ENCODE measurements at regions of chr2 and their contacts with region 1.

Region 1: DNA sequence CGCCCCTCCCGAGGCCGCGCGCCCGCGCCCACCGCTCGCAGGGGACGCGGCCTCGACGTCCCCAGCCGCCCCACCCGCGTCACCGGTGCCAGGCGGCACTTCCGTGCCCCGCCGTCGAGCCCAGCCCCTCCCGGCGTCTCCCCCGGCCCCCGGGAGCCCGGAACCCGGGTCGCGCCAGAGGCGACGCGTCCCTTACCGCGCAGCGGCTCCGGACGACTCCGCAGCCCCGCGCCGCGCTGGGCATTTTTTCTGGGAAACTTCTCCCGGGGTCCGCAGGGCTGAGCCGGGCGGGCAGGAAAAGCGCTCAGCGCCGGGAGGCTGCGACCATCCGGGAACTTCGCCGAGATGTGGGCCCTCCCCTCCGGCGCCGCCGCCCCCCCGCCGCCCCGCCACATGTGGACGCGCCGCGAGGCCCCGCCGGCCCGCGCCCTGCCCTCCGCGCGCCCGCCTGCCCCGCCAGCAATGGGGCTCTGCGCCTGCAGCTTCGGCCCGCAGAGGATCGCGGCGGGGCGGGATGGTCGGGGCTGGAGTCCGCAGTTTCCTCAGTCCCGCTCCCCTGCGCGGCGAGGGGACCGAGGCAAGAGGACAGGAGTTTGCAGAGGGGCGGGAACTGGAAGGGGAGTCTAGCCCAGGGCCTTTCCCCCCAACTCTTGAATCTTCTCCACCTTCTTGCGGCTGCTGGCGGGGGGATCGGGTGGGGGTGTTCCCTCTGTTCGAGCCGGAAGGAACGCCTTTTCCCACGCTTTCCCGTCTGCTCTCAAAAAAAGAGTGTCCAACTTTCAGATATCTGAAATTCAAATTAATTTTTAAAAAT is 81.5 kb downstream of the CHRNA1 start:
- DNase-seq: no peak
- ATAC-seq: peak; percentile 83
- H3K4me3 ChIP-seq: peak overlapping the region; percentile 54 to 58
- H3K27ac ChIP-seq: no peak overlapping the region
- H3K4me1 ChIP-seq: peaks cover 6% of the 10 kb centered on the region
- H3K27me3 ChIP-seq: peaks cover 22% of the 10 kb centered on the region
- CTCF ChIP-seq: no peak

Region 2: DNA sequence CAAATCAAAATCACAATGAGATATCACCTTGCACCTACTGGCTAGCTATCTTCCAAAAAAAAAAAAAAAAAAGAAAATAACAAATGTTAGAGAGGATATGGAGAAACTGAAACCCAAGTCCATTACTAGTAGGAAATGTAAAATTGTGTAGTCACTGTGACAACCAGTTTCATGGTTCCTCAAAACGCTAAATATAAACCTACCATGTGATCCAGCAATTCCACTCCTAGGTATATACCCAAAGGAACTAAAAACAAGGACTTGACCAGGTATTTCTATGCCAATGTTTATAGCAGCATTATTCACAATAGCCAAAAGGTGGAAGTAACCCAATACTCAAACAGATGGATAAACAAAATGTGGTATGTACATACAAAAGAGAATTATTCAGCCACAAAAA is 299.0 kb before region 1 on chr2:
- CTCF ChIA-PET with region 1: no interaction called
- POLR2A ChIA-PET with region 1: no interaction called
- in situ Hi-C with region 1: no loop called
- intact Hi-C with region 1: no loop called
- DNase-seq: no peak
- ATAC-seq: no peak
- H3K4me3 ChIP-seq: no peak overlapping the region
- H3K27ac ChIP-seq: no peak overlapping the region
- H3K4me1 ChIP-seq: no peaks in the 10 kb centered on the region
- H3K27me3 ChIP-seq: no peaks in the 10 kb centered on the region
- CTCF ChIP-seq: no peak

Region 3: DNA sequence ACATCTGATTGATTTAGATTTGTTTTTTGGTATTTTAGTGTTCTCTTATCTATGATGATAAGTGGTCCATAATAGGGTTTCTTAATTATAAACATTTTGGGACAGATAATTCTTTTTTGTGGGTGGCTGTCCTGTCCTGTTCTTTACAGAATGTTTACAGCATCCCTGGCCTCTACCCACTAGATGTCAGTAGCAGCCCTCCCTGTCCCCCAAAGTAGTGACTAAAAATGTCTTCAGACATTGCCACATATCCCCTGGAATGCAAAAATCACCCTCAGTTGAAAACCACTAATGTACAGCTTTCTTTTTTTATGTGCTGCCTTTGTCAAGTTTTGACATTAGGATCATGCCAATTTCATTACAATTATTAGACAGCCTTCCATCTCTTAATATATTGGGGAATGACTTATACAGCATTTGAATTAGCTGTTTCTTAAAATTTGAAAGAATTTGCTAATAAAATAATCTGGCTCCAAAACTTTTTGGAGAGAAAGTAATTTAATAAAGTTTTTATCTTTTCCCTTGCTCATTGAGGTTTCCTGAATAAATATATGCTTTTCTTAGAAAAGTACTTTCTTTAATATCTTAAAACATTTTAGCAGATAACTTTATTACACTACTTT is 104.7 kb before region 1 on chr2:
- CTCF ChIA-PET with region 1: interaction called, 3 read pairs
- POLR2A ChIA-PET with region 1: no interaction called
- in situ Hi-C with region 1: no loop called
- intact Hi-C with region 1: loop called (anchors 10 kb)
- DNase-seq: no peak
- ATAC-seq: no peak
- H3K4me3 ChIP-seq: no peak overlapping the region
- H3K27ac ChIP-seq: no peak overlapping the region
- H3K4me1 ChIP-seq: no peaks in the 10 kb centered on the region
- H3K27me3 ChIP-seq: no peaks in the 10 kb centered on the region
- CTCF ChIP-seq: peak; percentile 69